Activated CD8-positive, alpha-beta T cell treated with anti-CD3 and anti-CD28 coated beads, Interleukin-2, amount 10 ng/mL, durations not matched to agents 7 days and 5 days (primary cell): ENCODE measurements at regions of chr14 and their contacts with region 1.

Region 1: GRCh38 chr14:103500148-103500990 is 22.3 kb downstream of the CKB start:
- DNase-seq: peak; percentile 85
- ATAC-seq: peak; percentile 96
- H3K4me3 Mint-ChIP-seq: no peak overlapping the region
- H3K27ac Mint-ChIP-seq: no peak overlapping the region
- H3K4me1 Mint-ChIP-seq: no peaks in the 10 kb centered on the region
- H3K27me3 Mint-ChIP-seq: no peaks in the 10 kb centered on the region

Region 2: GRCh38 chr14:102870994-102871831 is 629.2 kb before region 1 on chr14:
- CTCF ChIA-PET with region 1: no interaction called
- POLR2A ChIA-PET with region 1: no interaction called
- DNase-seq: no peak
- ATAC-seq: no peak
- H3K4me3 Mint-ChIP-seq: no peak overlapping the region
- H3K27ac Mint-ChIP-seq: no peak overlapping the region
- H3K4me1 Mint-ChIP-seq: peaks cover 2% of the 10 kb centered on the region
- H3K27me3 Mint-ChIP-seq: no peaks in the 10 kb centered on the region

Region 3: GRCh38 chr14:103488071-103488470 is 12.3 kb before region 1 on chr14:
- CTCF ChIA-PET with region 1: interaction called, 15 read pairs
- POLR2A ChIA-PET with region 1: no interaction called
- DNase-seq: no peak
- ATAC-seq: no peak
- H3K4me3 Mint-ChIP-seq: no peak overlapping the region
- H3K27ac Mint-ChIP-seq: no peak overlapping the region
- H3K4me1 Mint-ChIP-seq: no peaks in the 10 kb centered on the region
- H3K27me3 Mint-ChIP-seq: no peaks in the 10 kb centered on the region

Region 4: DNA sequence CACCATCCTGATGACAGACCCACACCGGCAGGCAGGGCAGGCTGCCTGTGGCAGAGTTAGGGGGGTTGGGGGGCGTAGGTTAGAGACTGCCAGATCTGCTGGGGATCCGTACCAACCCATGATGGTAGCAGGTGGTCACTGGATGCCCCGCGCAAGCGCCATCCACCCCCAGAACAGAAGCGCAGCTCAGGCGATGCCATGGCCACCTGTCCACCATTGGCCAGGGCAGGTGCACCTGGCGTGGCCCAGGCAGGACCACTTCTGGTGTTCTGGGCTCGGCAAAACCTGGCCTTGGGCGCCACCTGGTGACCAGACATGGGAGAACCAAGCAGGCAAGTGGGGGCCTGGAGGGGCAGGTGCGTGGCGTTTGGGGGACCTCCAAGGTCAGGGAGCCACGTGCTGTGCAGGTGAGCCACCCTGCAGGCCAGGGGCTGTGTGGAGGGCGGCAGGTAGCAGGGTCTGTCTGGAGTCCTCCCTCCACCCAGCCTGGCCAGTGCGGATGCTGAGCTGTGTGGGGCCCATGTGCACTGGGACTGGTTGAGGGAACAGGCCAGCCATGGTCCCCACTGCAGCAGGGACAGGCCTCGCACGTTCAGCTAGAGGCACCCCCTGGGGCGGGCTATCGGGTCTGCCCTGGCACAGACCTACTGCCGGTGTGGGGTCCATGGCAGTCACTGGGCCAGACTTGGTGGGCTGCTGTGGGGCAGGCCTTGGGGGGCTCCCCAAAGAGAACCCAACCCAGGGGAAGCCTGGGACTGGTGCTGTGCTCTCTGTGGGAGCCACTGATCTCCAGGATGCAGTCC is 46.5 kb after region 1 on chr14:
- CTCF ChIA-PET with region 1: interaction called, 18 read pairs
- POLR2A ChIA-PET with region 1: no interaction called
- DNase-seq: peak; percentile 83
- ATAC-seq: peak; percentile 71
- H3K4me3 Mint-ChIP-seq: no peak overlapping the region
- H3K27ac Mint-ChIP-seq: no peak overlapping the region
- H3K4me1 Mint-ChIP-seq: no peaks in the 10 kb centered on the region
- H3K27me3 Mint-ChIP-seq: no peaks in the 10 kb centered on the region

Region 5: DNA sequence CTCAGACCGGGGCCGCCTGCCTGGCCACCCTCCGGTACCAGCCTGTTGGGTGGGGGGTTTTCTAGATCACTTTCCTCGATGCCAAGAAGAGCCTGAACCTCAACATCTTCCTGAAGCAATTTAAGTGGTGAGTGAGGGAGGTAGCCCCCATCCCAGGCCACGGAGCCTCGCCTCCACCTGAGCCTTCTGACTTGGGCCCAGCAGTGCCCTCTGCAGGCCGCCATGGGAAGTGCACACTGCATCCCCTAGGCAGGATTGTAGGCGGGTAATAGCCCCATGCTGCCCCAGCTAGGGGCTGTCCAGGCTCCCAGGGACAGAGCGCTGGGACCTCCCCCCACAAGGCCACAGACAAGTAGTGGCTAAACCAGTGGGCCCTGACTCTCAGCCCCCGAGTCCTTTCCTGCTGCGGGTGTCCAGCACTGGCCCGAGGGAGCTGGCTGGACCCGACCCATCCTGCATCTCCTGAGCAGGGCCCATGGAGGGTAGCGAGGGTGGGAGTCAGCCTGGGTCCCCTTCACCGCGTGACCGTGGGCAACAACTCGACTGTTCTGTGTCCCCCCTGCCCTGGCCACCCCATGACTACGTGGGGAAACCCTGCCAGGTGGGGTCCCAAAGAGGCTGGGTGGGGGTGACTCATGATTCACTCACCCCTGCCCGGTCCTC is 1208.4 kb after region 1 on chr14:
- CTCF ChIA-PET with region 1: no interaction called
- POLR2A ChIA-PET with region 1: no interaction called
- DNase-seq: peak; percentile 81
- ATAC-seq: peak; percentile 79
- H3K4me3 Mint-ChIP-seq: no peak overlapping the region
- H3K27ac Mint-ChIP-seq: no peak overlapping the region
- H3K4me1 Mint-ChIP-seq: peaks cover 1% of the 10 kb centered on the region
- H3K27me3 Mint-ChIP-seq: no peaks in the 10 kb centered on the region